Activated CD4-positive, alpha-beta memory T cell treated with anti-CD3 and anti-CD28 coated beads for 36 hours (primary cell): ENCODE measurements at regions of chr11 and their contacts with region 1.

Region 1: DNA sequence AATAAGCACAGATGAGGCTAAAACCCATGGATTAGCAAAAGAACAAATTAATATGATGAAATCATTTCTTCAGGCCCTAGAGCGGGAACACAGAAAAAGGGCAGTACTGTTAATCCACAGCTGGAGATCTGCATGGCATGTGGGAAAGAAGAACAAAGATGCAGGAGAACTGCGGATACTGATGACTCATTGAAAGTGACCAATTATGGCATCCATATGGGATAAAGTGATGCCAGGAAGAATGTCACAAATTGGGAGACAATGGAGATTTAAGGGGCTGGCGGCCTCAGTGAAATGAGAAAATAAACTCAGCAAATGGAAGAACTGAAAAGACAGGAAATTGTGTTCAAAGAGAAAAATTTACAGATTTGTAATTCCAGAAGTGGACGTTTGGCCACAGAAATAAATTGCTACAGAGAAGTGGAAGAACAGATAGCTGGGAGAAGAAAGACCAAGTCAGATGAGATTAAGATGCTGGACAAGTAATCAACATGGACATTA is 39.4 kb downstream of the SIK3 start:
- DNase-seq: no peak
- H3K4me3 Mint-ChIP-seq: no peak overlapping the region
- H3K27ac Mint-ChIP-seq: no peak overlapping the region
- H3K4me1 Mint-ChIP-seq: peaks cover 59% of the 10 kb centered on the region
- H3K27me3 Mint-ChIP-seq: no peaks in the 10 kb centered on the region

Region 2: DNA sequence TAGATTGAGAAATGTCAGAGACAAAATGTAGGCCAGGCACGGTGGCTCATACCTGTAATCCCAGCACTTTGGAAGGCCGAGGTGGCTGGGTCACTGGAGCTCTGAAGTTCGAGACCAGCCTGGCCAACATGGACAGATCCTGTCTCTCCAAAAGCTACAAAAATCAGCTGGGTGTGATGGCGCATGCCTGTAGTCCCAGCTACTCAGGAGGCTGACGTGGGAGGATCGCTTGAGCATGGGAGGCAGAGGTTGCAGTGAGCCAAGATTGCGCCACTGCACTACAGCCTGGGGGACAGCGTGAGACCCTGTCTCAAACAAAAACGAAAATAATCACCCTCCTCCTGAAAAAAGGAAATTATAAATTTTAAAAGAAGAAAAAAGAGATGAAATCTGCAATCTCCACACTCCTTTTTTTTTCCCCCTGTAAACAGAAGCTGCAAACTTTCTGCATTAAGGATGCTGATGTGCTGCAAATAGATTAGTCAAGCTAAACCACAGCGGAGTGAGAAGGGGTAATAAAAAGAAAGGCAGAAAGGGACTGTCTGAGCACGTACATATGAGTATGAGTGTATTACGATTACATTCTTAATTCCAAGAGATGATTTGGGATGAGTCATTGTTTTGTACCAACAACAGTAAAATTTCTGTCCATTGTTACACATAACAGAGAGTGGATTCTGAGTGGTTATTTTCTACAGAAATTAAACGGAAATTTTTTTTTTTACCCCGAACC is 47.8 kb before region 1 on chr11:
- CTCF ChIA-PET with region 1: interaction called, 3 read pairs
- POLR2A ChIA-PET with region 1: interaction called, 3 read pairs
- intact Hi-C with region 1: loop called (anchors 1 kb)
- DNase-seq: no peak
- H3K4me3 Mint-ChIP-seq: no peak overlapping the region
- H3K27ac Mint-ChIP-seq: peak overlapping the region; percentile 84
- H3K4me1 Mint-ChIP-seq: peaks cover 51% of the 10 kb centered on the region
- H3K27me3 Mint-ChIP-seq: no peaks in the 10 kb centered on the region

Region 3: GRCh38 chr11:117528097-117528721 is 469.4 kb after region 1 on chr11:
- CTCF ChIA-PET with region 1: no interaction called
- POLR2A ChIA-PET with region 1: no interaction called
- intact Hi-C with region 1: no loop called
- DNase-seq: no peak
- H3K4me3 Mint-ChIP-seq: no peak overlapping the region
- H3K27ac Mint-ChIP-seq: no peak overlapping the region
- H3K4me1 Mint-ChIP-seq: no peaks in the 10 kb centered on the region
- H3K27me3 Mint-ChIP-seq: peaks cover 10% of the 10 kb centered on the region